OCI-LY7 (cell line): ENCODE measurements at regions of chr10 and their contacts with region 1.

Region 1: DNA sequence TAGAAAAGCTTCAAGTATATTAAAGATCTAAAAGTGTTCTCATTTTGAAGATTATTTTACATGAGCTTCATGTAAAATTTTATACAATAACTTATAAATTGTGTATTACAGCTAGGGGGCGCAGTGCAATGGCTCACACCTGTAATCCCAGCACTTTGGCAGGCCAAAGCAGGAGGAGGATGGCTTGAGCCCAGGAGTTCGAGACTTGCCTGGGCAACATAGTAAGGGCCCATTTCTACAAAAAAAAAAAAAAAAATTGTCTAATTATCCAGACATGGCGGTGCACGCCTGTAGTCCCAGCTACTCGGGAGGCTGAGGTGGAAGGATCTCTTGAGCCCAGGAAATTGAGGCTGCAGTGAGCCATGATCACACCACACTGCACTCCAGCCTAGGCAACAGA is 16.6 kb downstream of the ACBD5 start:
- DNase-seq: peak; percentile 64
- H3K4me3 ChIP-seq: no peak overlapping the region
- H3K27ac ChIP-seq: no peak overlapping the region
- H3K4me1 ChIP-seq: no peaks in the 10 kb centered on the region
- CTCF ChIP-seq: peak; percentile 88

Region 2: DNA sequence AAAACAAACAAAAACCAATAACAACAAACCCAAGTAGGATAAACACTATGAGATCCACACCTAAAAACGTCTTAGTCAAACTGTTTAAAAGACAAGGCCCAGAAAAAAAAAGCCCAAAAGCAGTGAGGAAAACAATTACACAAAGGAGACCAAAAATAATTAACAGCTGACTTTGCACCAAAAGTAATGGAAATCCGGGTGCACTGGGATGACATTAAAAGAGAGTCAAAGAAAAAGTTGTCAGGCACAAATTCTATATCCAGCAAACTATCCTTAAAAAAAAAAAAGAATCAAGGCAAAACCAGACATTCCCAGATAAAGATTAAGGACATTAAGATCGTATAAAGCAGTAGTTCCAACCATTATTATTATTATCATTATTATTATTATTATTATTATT is 115.8 kb before region 1 on chr10:
- CTCF ChIA-PET with region 1: no interaction called
- POLR2A ChIA-PET with region 1: no interaction called
- intact Hi-C with region 1: no loop called
- DNase-seq: no peak
- H3K4me3 ChIP-seq: no peak overlapping the region
- H3K27ac ChIP-seq: no peak overlapping the region
- H3K4me1 ChIP-seq: no peaks in the 10 kb centered on the region
- CTCF ChIP-seq: no peak

Region 3: GRCh38 chr10:27169849-27170248 is 54.1 kb before region 1 on chr10:
- CTCF ChIA-PET with region 1: no interaction called
- POLR2A ChIA-PET with region 1: no interaction called
- intact Hi-C with region 1: loop called (anchors 5 kb)
- DNase-seq: no peak
- H3K4me3 ChIP-seq: no peak overlapping the region
- H3K27ac ChIP-seq: no peak overlapping the region
- H3K4me1 ChIP-seq: no peaks in the 10 kb centered on the region
- CTCF ChIP-seq: no peak

Region 4: DNA sequence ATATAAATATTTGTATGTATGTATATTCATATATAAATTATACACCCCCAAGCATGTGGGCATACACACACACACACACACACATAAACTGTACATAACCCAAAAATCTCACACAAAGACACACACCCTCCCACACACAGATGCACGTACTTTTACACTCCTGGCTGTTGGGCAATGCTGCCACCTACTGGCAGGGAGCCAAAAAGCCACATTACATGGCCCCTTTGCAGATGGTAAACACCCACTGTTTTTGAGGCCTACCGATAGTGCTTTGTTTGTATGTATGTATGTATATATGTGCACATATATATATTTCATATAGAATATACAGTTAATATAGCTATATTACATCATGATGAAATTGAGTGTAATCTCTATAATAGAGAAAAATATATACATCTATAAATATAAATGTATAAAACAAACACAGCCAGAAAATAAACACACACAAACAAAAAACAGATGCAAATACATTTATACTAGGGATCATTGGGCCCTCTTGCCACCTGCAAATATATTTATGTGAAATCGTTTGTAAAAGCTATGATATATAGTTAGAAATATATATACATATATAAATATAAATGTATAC is 136.7 kb after region 1 on chr10:
- CTCF ChIA-PET with region 1: interaction called, 3 read pairs
- POLR2A ChIA-PET with region 1: no interaction called
- intact Hi-C with region 1: loop called (anchors 2 kb)
- DNase-seq: peak; percentile 80
- H3K4me3 ChIP-seq: no peak overlapping the region
- H3K27ac ChIP-seq: no peak overlapping the region
- H3K4me1 ChIP-seq: no peaks in the 10 kb centered on the region
- CTCF ChIP-seq: peak; percentile 92